Activated naive CD4-positive, alpha-beta T cell treated with anti-CD3 and anti-CD28 coated beads for 36 hours (primary cell): ENCODE measurements at regions of chr6 and their contacts with region 1.

Region 1: DNA sequence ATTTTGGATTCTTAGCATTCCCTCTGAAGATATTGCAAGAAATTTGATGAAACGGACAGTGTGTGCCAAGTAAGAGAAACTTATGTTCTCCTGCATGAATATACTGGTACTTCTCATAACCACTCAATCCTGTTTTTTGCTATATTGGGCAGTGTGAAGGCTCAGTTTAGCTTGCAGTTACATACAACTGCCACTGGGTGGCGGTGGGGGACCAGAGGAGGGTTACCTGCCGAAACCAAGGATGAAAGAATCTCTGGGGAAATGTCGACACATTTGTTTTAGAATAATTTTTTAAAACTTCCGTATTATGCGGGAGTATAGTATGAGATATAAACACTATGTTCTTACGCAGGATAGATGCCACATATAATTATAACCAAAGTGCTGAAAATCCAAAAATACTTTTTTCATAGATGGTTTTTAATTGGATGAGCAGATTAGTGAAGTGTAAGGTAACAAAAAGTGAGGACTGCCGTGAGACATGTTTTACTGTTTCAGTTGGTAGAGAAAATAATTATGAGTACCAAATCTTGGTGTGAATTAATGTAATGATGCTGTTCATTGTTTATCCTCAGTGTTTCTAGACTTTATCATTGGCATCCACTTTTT is 9.7 kb downstream of the TRMT11 start:
- DNase-seq: peak; percentile 77
- H3K4me3 Mint-ChIP-seq: peak overlapping the region; percentile 48
- H3K27ac Mint-ChIP-seq: no peak overlapping the region
- H3K4me1 Mint-ChIP-seq: peaks cover 29% of the 10 kb centered on the region
- H3K27me3 Mint-ChIP-seq: no peaks in the 10 kb centered on the region

Region 2: DNA sequence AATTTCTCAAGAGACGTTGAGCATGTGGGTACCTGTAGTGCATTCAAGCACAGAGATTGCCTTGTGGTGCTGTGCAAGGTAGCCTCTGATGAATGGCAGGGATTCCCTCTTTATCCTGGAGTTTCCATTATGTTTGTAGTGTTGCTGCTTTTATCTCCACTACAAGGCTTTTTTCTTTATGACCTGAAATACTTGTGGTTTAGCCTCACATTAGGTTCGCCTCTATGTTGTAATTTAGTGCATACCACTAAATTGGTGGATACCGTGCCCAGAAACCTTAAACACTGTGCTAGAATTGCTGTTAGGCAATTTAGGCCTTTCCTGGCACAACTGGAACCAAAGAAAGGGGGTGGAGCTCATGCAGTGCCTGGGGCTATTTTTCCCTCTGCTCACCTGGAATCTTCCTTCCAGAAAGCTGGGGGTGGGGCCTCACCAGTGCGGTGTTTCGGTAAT is 128.6 kb before region 1 on chr6:
- CTCF ChIA-PET with region 1: no interaction called
- intact Hi-C with region 1: no loop called
- DNase-seq: no peak
- H3K4me3 Mint-ChIP-seq: no peak overlapping the region
- H3K27ac Mint-ChIP-seq: no peak overlapping the region
- H3K4me1 Mint-ChIP-seq: no peaks in the 10 kb centered on the region
- H3K27me3 Mint-ChIP-seq: no peaks in the 10 kb centered on the region

Region 3: DNA sequence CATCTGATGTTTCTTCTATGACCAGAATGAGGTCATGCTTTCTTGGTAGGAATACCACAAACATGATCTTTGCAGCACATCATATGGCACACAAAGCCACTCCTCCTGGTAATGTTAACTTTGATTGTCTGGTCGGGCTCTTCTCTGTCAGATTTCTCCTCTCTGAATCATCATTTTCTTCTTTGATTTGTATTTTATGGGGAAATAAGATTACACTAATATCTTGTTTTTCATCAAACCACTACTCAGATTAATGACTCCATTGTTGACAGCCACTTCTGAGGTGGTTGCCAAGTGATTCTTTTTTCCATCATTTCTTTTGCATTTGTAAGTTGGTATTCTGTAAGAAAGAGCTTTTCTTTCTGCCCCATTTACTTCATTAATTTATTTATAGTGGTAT is 19.8 kb after region 1 on chr6:
- CTCF ChIA-PET with region 1: interaction called, 12 read pairs
- intact Hi-C with region 1: no loop called
- DNase-seq: no peak
- H3K4me3 Mint-ChIP-seq: no peak overlapping the region
- H3K27ac Mint-ChIP-seq: no peak overlapping the region
- H3K4me1 Mint-ChIP-seq: no peaks in the 10 kb centered on the region
- H3K27me3 Mint-ChIP-seq: no peaks in the 10 kb centered on the region

Region 4: DNA sequence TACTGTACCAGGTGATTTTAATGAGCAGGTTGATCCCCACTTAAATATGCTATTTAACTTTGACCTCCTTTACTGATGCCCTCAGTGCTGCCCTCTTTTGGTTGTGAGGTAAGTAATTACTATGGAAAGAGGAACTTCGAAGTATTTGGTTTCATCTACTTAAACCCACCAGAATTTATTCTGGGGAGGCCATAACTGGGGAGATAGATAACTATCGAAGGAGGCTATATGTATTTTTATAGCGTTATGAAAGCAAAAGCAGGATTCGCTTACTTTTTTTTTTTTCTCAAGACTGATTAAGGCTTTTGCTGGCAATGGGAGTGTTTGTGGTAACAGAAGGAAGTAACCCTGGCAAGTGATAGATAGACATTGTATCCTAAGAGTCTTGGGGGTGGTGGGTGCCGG is 174.9 kb after region 1 on chr6:
- CTCF ChIA-PET with region 1: interaction called, 3 read pairs
- intact Hi-C with region 1: loop called (anchors 1 kb)
- DNase-seq: peak; percentile 39
- H3K4me3 Mint-ChIP-seq: no peak overlapping the region
- H3K27ac Mint-ChIP-seq: no peak overlapping the region
- H3K4me1 Mint-ChIP-seq: peaks cover 4% of the 10 kb centered on the region
- H3K27me3 Mint-ChIP-seq: no peaks in the 10 kb centered on the region

Region 5: DNA sequence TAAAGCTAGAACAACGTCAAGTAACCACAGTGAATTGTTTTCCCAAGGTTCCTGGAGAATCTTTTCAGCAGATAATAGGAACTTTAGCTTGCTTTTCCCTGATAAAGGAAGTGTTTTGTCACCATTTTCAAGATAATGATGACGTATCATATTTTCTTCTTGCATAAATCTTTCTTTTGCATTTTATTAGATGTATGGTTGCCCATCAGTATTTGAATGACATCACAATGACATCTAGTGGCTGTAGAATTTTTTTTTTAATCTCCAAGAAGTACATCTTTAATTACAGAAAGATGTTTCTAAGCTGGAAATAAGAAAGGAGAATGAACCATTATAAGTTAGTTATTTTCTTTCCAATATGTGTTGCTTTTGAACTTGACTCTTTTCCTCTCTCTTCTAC is 426.8 kb after region 1 on chr6:
- CTCF ChIA-PET with region 1: no interaction called
- intact Hi-C with region 1: loop called (anchors 10 kb)
- DNase-seq: no peak
- H3K4me3 Mint-ChIP-seq: no peak overlapping the region
- H3K27ac Mint-ChIP-seq: no peak overlapping the region
- H3K4me1 Mint-ChIP-seq: no peaks in the 10 kb centered on the region
- H3K27me3 Mint-ChIP-seq: no peaks in the 10 kb centered on the region

Region 6: DNA sequence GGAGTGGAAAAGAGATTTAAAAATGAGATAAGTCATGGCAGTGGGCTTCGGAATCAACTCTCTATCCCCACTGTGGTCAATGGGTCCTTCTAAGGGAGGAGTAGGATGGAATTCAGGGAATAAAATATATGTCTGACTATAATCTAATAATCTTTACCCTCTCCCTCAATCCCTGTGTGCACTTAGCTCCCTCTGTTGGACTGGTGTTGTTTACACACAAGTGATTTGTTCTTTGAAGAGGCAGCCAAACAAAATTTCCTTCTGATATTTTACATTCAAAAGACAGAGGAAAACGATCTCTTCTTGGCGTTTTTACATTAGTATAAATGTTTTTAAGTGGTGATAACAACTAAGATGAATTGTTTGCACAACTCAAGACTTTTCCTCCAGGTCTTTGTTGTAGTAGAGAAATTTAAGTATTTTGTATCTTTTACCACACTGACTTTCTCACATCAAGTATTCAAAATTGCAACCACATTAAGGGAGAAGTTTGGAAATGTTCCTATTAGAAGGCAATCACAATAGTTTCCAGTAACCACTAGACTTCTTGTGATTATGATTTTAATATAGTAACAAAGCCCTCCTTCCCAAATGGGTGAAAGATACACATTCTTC is 661.6 kb after region 1 on chr6:
- CTCF ChIA-PET with region 1: no interaction called
- intact Hi-C with region 1: loop called (anchors 5 kb)
- DNase-seq: peak; percentile 11
- H3K4me3 Mint-ChIP-seq: no peak overlapping the region
- H3K27ac Mint-ChIP-seq: no peak overlapping the region
- H3K4me1 Mint-ChIP-seq: no peaks in the 10 kb centered on the region
- H3K27me3 Mint-ChIP-seq: no peaks in the 10 kb centered on the region